ENCODE measurements at regions of chr9 and their contacts with region 1.

Region 1: GRCh38 chr9:35116898-35117551 is 1.4 kb upstream of the ATOSB start:
- DNase-seq: peak; percentile 73 to 97
- ATAC-seq: peak; percentile 51 to 84 (median 66)
- H3K4me3 ChIP-seq: peak overlapping the region; percentile 67
- H3K4me3 Mint-ChIP-seq: peak overlapping the region; percentile 97
- H3K27ac ChIP-seq: peak overlapping the region; percentile 79
- H3K27ac Mint-ChIP-seq: peak overlapping the region; percentile 92 to 95
- H3K4me1 ChIP-seq: peaks cover 41% of the 10 kb centered on the region
- H3K4me1 Mint-ChIP-seq: peaks cover 38 to 45% of the 10 kb centered on the region in 2 donors
- H3K27me3 ChIP-seq: no peaks in the 10 kb centered on the region
- H3K27me3 Mint-ChIP-seq: peaks cover 0 to 9% of the 10 kb centered on the region in 2 donors
- CTCF ChIP-seq: peak; percentile 96

Region 2: GRCh38 chr9:34948451-34948850 is 168.6 kb before region 1 on chr9:
- intact Hi-C with region 1: no loop called
- DNase-seq: no peak
- ATAC-seq: no peak
- H3K4me3 ChIP-seq: no peak overlapping the region
- H3K4me3 Mint-ChIP-seq: no peak overlapping the region
- H3K27ac ChIP-seq: no peak overlapping the region
- H3K27ac Mint-ChIP-seq: no peak overlapping the region
- H3K4me1 ChIP-seq: no peaks in the 10 kb centered on the region
- H3K4me1 Mint-ChIP-seq: no peaks in the 10 kb centered on the region
- H3K27me3 ChIP-seq: peaks cover 6% of the 10 kb centered on the region
- H3K27me3 Mint-ChIP-seq: peaks cover 22 to 47% of the 10 kb centered on the region in 2 donors
- CTCF ChIP-seq: no peak

Region 3: GRCh38 chr9:35079426-35080341 is 37.3 kb before region 1 on chr9 and contains the start of gene FANCG:
- intact Hi-C with region 1: loop called (anchors 1 kb)
- DNase-seq: peak; percentile 62 to 87
- ATAC-seq: peak; percentile 93 to 96 (median 95)
- H3K4me3 ChIP-seq: peak within 1 kb of the TSS; percentile 76
- H3K4me3 Mint-ChIP-seq: peak within 1 kb of the TSS; percentile 96
- H3K27ac ChIP-seq: peak within 1 kb of the TSS; percentile 32
- H3K27ac Mint-ChIP-seq: peak within 1 kb of the TSS; percentile 63 to 86
- H3K4me1 ChIP-seq: peaks cover 20% of the 10 kb centered on the region
- H3K4me1 Mint-ChIP-seq: peaks cover 19 to 22% of the 10 kb centered on the region in 2 donors
- H3K27me3 ChIP-seq: no peaks in the 10 kb centered on the region
- H3K27me3 Mint-ChIP-seq: no peaks in the 10 kb centered on the region
- CTCF ChIP-seq: no peak
- total RNA-seq, gene FANCG: 33.9 to 38.9 (median 35.7) TPM

Region 4: GRCh38 chr9:35161713-35162604 is 44.9 kb after region 1 on chr9 and contains the start of gene UNC13B:
- intact Hi-C with region 1: loop called (anchors 5 kb)
- DNase-seq: peak; percentile 58 to 83
- ATAC-seq: peak; percentile 81 to 86 (median 83)
- H3K4me3 ChIP-seq: peak within 1 kb of the TSS; percentile 73
- H3K4me3 Mint-ChIP-seq: peak within 1 kb of the TSS; percentile 92
- H3K27ac ChIP-seq: no peak within 1 kb of the TSS
- H3K27ac Mint-ChIP-seq: peak within 1 kb of the TSS in 1 of 2 donors; percentile 77
- H3K4me1 ChIP-seq: peaks cover 6% of the 10 kb centered on the region
- H3K4me1 Mint-ChIP-seq: peaks cover 9 to 14% of the 10 kb centered on the region in 2 donors
- H3K27me3 ChIP-seq: no peaks in the 10 kb centered on the region
- H3K27me3 Mint-ChIP-seq: peaks cover 7 to 20% of the 10 kb centered on the region in 2 donors
- CTCF ChIP-seq: no peak
- total RNA-seq, gene UNC13B: 0.21 to 0.78 (median 0.27) TPM

Region 5: DNA sequence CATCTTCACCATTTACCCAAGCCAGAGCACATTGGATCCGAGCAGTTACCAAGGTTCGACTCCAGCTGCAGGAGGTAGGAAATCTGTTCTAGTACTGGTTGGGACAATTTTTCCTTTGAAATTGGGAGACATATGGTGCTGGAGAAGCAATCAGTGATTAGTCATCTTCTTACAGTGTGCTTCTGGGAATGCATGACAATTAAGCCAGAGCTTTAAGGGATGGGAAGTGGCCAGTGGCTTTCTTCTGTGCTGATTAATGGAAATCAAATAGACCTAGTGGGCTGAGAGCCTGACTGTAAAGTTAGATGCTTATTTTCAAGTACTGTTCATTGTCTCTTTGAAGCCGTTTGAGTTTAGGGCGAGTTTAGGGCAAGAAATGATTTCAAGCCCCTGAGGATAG is 196.9 kb after region 1 on chr9:
- intact Hi-C with region 1: no loop called
- DNase-seq: no peak
- ATAC-seq: no peak
- H3K4me3 ChIP-seq: no peak overlapping the region
- H3K4me3 Mint-ChIP-seq: no peak overlapping the region
- H3K27ac ChIP-seq: no peak overlapping the region
- H3K27ac Mint-ChIP-seq: no peak overlapping the region
- H3K4me1 ChIP-seq: no peaks in the 10 kb centered on the region
- H3K4me1 Mint-ChIP-seq: no peaks in the 10 kb centered on the region
- H3K27me3 ChIP-seq: no peaks in the 10 kb centered on the region
- H3K27me3 Mint-ChIP-seq: peaks cover 10 to 31% of the 10 kb centered on the region in 2 donors
- CTCF ChIP-seq: no peak

Region 6: GRCh38 chr9:35481347-35481975 is 364.4 kb after region 1 on chr9:
- intact Hi-C with region 1: loop called (anchors 1 kb)
- DNase-seq: peak in 1 of 2 donors; percentile 34
- ATAC-seq: peak in 1 of 3 donors; percentile 55
- H3K4me3 ChIP-seq: no peak overlapping the region
- H3K4me3 Mint-ChIP-seq: no peak overlapping the region
- H3K27ac ChIP-seq: no peak overlapping the region
- H3K27ac Mint-ChIP-seq: no peak overlapping the region
- H3K4me1 ChIP-seq: no peaks in the 10 kb centered on the region
- H3K4me1 Mint-ChIP-seq: no peaks in the 10 kb centered on the region
- H3K27me3 ChIP-seq: peaks cover 7% of the 10 kb centered on the region
- H3K27me3 Mint-ChIP-seq: peaks cover 4 to 15% of the 10 kb centered on the region in 2 donors
- CTCF ChIP-seq: peak; percentile 12

Region 7: DNA sequence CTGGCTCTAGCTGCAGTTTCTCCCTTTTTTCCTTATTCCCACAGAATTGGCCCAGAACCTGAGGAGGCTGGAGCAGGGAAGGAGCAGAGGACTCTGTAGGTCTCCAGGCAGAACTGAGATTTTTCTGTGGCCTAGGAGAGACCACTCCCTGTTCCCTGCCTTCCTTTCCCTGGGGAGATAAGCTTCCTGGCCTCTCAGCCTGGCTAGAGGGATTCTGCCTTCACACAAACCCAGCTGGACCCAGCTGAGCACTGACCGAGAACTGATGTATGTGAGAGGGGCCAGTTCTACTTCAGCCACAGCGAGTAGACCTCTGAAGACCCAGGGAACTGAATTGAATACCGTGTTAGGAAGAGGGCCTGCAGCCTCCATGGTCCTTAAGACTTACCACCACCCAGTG is 420.9 kb after region 1 on chr9:
- intact Hi-C with region 1: no loop called
- DNase-seq: no peak
- ATAC-seq: no peak
- H3K4me3 ChIP-seq: no peak overlapping the region
- H3K4me3 Mint-ChIP-seq: no peak overlapping the region
- H3K27ac ChIP-seq: no peak overlapping the region
- H3K27ac Mint-ChIP-seq: no peak overlapping the region
- H3K4me1 ChIP-seq: peaks cover 4% of the 10 kb centered on the region
- H3K4me1 Mint-ChIP-seq: no peaks in the 10 kb centered on the region
- H3K27me3 ChIP-seq: no peaks in the 10 kb centered on the region
- H3K27me3 Mint-ChIP-seq: peaks cover 0 to 6% of the 10 kb centered on the region in 2 donors
- CTCF ChIP-seq: no peak

Region 8: DNA sequence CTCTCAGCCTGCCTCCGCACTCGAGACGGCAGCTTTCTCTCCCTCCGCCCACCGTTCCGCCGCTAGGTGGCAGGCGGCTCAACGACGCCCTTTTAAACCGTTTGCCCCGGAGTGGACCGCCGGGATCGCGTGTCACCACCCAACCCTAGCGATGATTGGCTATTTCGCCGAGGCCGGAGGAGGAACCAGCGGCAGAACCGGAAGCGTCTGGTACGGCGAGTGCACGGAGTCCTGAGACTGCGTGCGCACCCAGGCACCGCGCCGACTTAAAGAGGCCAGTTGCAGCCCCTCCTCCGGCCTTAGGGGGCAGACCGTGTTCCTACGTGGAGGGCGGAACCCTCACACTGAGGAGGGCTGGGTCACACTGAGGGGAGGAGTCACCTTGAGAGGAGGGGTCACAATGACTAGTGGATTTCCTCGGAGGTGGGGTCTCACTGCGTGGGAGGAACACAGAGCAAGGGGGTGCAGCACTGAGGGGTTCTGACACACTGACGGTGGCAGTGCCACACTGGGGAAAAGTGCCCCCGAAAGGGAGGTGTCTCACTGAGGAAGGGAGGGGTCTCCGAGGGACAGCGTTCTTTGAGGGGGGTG is 487.1 kb after region 1 on chr9:
- intact Hi-C with region 1: loop called (anchors 2 kb)
- DNase-seq: peak; percentile 98 to 100
- ATAC-seq: peak; percentile 88 to 97 (median 90)
- H3K4me3 ChIP-seq: peak overlapping the region; percentile 51
- H3K4me3 Mint-ChIP-seq: peak overlapping the region; percentile 98
- H3K27ac ChIP-seq: peak overlapping the region; percentile 80
- H3K27ac Mint-ChIP-seq: peak overlapping the region; percentile 96 to 98
- H3K4me1 ChIP-seq: peaks cover 37% of the 10 kb centered on the region
- H3K4me1 Mint-ChIP-seq: peaks cover 22 to 37% of the 10 kb centered on the region in 2 donors
- H3K27me3 ChIP-seq: no peaks in the 10 kb centered on the region
- H3K27me3 Mint-ChIP-seq: no peaks in the 10 kb centered on the region
- CTCF ChIP-seq: peak; percentile 98

Measured in natural killer cell (primary cell).